ENCODE measurements at regions of chr16 and their contacts with region 1.

Region 1: DNA sequence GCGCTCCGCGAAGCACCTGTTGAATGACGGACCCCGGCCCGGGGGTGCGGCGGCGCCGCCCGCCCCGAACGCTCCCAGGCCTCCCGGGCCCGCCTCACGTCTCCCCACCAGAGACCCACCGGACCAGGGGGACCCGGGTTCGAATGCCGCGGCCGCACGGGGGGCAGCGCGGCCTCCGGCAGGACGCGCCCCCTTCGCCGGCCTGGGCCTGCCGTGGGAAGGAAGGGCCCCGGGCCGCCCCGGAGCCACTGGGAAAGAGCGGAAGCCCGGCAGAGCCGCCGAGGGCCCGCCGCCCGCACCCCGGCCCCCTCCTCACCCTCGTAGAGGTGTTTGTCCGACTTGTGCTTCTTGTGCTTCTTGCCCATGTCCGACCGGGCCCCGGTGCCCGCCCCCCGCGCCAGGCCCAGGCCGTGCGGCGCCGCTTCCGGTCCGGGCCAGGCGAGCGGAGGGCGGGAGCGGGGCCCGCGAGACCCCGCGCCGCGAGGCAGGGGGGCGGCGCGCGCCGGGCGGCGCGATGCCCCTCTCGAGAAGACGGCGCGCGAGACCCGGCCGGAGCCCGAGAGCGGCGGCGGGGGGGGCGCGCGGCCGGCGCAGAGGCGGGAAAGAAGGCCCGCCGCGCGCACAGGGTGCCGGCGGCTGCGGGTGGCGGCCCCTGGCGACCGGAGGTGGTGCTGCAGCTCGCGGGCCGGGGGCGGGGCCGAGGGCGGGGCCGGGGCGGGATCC is at the start of gene BRD7:
- DNase-seq: peak; percentile 66
- H3K4me3 Mint-ChIP-seq: peak within 1 kb of the TSS; percentile 84
- H3K27ac Mint-ChIP-seq: peak within 1 kb of the TSS; percentile 85
- H3K4me1 Mint-ChIP-seq: peaks cover 47% of the 10 kb centered on the region
- H3K27me3 Mint-ChIP-seq: peaks cover 14% of the 10 kb centered on the region

Region 2: DNA sequence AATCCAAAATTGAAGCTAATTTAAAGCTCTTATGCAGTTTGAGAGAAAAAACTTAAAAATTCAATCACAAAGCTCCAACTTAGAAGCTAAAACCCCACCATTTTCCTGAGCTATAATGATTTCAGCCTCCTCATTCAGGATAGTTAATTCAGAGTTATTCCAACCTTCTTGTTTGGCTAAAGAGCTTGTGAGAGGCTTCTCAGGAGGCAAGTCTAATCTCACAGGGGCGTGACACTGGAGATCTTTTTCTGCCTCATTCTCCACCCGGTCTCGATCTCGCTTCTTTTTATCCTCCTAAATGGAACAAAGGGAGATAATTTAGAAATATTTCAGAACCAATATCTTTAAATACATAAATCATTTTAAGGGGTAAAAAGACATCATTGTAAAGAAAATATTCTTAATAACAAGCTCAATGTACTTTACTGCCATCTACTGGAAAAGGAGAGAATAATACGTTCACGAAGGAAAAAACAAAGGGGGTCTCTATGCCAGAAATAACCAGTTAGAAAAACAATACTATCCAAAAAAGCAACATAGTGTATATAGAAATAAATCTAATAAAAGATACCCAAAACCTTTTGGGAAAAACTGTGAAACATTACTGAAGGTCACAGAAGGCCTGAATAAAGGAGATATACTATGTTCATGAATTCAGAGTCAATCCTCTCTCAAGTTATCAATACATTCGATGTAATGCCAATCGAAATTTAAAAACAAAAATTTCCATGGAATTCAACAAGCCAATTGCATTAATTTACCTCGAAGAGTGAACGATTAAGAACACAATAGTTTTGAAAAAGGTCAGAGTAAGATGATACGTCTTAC is 13.7 kb before region 1 on chr16:
- CTCF ChIA-PET with region 1: interaction called, 22 read pairs
- DNase-seq: no peak
- H3K4me3 Mint-ChIP-seq: no peak overlapping the region
- H3K27ac Mint-ChIP-seq: peak overlapping the region; percentile 60
- H3K4me1 Mint-ChIP-seq: peaks cover 22% of the 10 kb centered on the region
- H3K27me3 Mint-ChIP-seq: no peaks in the 10 kb centered on the region

Region 3: GRCh38 chr16:50390914-50391716 is 22.5 kb after region 1 on chr16:
- CTCF ChIA-PET with region 1: no interaction called
- DNase-seq: no peak
- H3K4me3 Mint-ChIP-seq: no peak overlapping the region
- H3K27ac Mint-ChIP-seq: no peak overlapping the region
- H3K4me1 Mint-ChIP-seq: peaks cover 11% of the 10 kb centered on the region
- H3K27me3 Mint-ChIP-seq: peaks cover 11% of the 10 kb centered on the region

Region 4: DNA sequence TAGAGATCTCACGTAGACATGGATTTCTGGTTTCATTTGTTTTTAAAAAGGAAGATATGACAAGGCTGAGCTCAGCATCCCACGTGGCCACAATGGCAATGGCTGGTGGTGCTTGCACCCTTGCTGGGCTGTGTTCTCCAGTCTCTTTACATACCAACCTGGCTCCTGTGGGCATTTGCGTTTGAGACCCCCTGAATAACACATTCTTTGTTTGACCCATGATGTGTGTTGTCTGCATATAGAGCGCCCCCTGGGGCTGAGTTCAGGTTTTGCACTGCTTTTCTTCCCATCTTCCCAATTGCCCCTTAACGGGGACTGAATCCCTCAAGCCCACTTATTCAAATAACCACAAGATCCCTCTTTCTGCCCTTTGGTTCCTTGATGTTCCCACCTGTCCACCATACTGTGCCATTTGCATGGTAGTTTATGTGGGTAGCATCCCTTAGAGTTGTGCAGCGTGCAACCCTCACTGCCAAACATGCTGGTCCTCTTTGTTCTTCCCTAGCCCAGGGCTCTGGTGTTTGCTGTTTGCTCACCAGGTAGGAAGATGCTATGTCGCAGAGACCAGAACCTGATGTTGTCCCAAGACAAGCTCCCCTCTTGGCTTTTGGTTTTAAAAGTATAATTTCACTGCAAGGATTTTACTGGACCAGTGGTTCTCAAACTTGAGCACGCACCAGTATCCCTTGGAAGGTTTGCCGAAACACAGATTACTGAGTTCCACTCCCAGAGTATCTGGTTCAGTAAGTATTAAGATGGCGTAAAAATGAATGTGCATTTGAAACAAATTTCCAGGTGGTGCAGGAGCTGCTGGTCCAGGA is 141.2 kb after region 1 on chr16:
- CTCF ChIA-PET with region 1: interaction called, 16 read pairs
- DNase-seq: peak; percentile 58
- H3K4me3 Mint-ChIP-seq: no peak overlapping the region
- H3K27ac Mint-ChIP-seq: no peak overlapping the region
- H3K4me1 Mint-ChIP-seq: no peaks in the 10 kb centered on the region
- H3K27me3 Mint-ChIP-seq: peaks cover 6% of the 10 kb centered on the region